Heart right ventricle (tissue), 16 donors: ENCODE measurements at regions of chr3 and their contacts with region 1.

Region 1: GRCh38 chr3:194265483-194265892 is 85.6 kb downstream of the CPN2 start:
- DNase-seq: peak; percentile 92 to 94
- ATAC-seq: peak; percentile 78 to 88 (median 80)
- H3K4me3 ChIP-seq: peak overlapping the region in 2 of 10 donors; percentile 12 to 20
- H3K27ac ChIP-seq: peak overlapping the region in 9 of 10 donors; percentile 70 to 93 (median 85)
- H3K4me1 ChIP-seq: peaks cover 32 to 68% (median 60%) of the 10 kb centered on the region in 9 donors
- H3K27me3 ChIP-seq: no peaks in the 10 kb centered on the region
- CTCF ChIP-seq: no peak

Region 2: DNA sequence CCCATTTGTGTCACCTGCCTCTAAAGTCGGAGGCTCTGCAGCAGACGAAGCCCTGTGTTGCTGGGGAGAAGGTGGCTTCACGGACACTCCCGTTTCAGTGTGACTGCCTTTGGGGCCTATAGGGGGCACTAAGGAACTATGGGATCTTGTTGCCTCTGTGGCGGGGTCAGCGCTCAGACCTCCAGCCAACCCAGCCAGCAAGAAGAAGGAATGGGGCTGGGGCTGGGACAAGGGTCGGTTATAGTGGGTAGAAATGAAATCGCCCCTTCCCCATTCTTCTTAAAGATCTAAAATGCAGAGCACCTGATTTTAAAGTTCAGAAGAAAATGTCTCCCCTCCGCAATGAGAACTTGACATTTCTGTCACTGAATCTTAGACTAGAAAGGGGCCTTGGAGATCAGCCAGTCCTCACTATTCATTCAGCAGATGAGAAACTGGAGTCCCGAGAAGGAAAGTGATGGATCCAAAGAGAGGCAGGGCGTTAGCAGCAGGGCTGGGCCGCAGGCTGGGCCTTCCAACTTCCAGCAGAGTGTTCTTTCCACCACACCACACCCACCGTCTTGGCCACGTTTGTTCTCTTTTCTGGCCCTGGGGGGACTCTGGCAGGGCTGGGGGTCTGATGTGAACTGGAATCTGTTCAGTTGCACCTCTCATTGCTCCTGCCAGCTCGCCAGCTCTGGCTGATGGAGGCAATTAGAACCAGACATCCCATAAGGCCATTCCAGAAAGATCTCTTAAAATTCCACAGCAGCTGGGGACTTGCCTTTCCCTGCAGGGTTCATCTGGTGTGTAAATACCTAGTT is 477.1 kb before region 1 on chr3:
- intact Hi-C with region 1: loop called in 1 of 10 experiments (anchors 5 kb)
- DNase-seq: peak; percentile 51 to 76
- ATAC-seq: peak; percentile 87 to 97 (median 95)
- H3K4me3 ChIP-seq: no peak overlapping the region
- H3K27ac ChIP-seq: peak overlapping the region in 4 of 10 donors; percentile 6 to 39 (median 16)
- H3K4me1 ChIP-seq: peaks cover 7 to 22% (median 12%) of the 10 kb centered on the region in 9 donors
- H3K27me3 ChIP-seq: peaks cover 3 to 61% (median 50%) of the 10 kb centered on the region in 7 donors
- CTCF ChIP-seq: peak; percentile 63 to 94 (median 84)

Region 3: GRCh38 chr3:194009892-194010533 is 255.5 kb before region 1 on chr3:
- intact Hi-C with region 1: loop called in 2 of 10 experiments (anchors 5 to 10 kb)
- DNase-seq: peak in 1 of 2 donors; percentile 12
- ATAC-seq: peak in 6 of 8 donors; percentile 46 to 73 (median 52)
- H3K4me3 ChIP-seq: no peak overlapping the region
- H3K27ac ChIP-seq: no peak overlapping the region
- H3K4me1 ChIP-seq: peaks cover 0 to 17% (median 5%) of the 10 kb centered on the region in 9 donors
- H3K27me3 ChIP-seq: peaks cover 0 to 82% (median 26%) of the 10 kb centered on the region in 7 donors
- CTCF ChIP-seq: peak in 1 of 9 donors; percentile 6

Region 4: DNA sequence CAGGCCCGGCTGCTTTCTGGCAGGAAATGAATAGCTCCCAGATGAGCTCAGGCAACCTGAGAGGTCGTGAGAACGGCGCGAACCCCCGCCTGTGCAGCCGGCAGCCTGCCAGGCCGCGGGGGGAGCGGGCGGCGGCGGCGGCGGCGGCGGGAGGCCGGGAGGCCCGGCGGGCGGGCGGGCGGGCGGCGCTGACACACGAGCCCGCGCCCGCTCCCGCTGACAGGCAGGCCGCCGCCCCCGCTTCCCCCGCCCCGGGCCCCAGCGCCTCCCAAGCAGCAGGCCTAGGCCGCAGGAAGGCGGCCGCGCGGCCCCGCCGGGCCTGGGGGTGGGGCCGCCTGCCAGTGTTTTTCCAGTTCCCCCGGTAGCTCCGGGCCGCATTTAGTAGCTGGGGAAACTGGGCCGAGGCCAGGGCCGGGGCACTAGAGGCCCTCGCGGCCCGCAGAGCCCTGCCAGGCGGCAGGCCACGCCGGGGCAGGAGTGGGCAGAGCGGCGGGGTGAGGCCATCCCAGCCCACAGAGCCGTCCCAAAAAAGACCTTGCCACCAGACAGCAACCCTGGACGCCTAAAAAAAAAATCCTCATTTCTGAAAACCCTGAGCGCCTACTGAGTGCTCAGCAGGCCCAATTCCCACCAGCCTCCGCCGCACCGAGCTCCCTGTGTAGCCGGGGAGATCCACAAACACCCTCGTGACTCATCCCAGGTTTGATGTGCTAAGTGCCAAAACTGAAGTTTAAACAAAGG is 123.9 kb before region 1 on chr3:
- intact Hi-C with region 1: loop called in 8 of 10 experiments (anchors 2 to 5 kb)
- DNase-seq: peak; percentile 93
- ATAC-seq: peak; percentile 66 to 89 (median 76)
- H3K4me3 ChIP-seq: peak overlapping the region in 8 of 10 donors; percentile 26 to 57 (median 52)
- H3K27ac ChIP-seq: peak overlapping the region; percentile 91 to 97 (median 94)
- H3K4me1 ChIP-seq: peaks cover 18 to 61% (median 47%) of the 10 kb centered on the region in 9 donors
- H3K27me3 ChIP-seq: peaks cover 0 to 76% (median 0%) of the 10 kb centered on the region in 7 donors
- CTCF ChIP-seq: peak in 3 of 9 donors; percentile 19 to 34 (median 24)

Region 5: GRCh38 chr3:194250098-194251002 is 15.1 kb before region 1 on chr3:
- intact Hi-C with region 1: no loop called
- DNase-seq: peak; percentile 87 to 88
- ATAC-seq: peak; percentile 70 to 81 (median 77)
- H3K4me3 ChIP-seq: peak overlapping the region in 6 of 10 donors; percentile 2 to 21 (median 10)
- H3K27ac ChIP-seq: peak overlapping the region in 2 of 10 donors; percentile 14 to 21
- H3K4me1 ChIP-seq: peaks cover 8 to 55% (median 37%) of the 10 kb centered on the region in 9 donors
- H3K27me3 ChIP-seq: peaks cover 0 to 12% (median 0%) of the 10 kb centered on the region in 7 donors
- CTCF ChIP-seq: no peak

Region 6: GRCh38 chr3:194306109-194306686 is 40.7 kb after region 1 on chr3:
- intact Hi-C with region 1: loop called in 3 of 10 experiments (anchors 5 kb)
- DNase-seq: no peak
- ATAC-seq: peak in 2 of 8 donors; percentile 26 to 28
- H3K4me3 ChIP-seq: no peak overlapping the region
- H3K27ac ChIP-seq: no peak overlapping the region
- H3K4me1 ChIP-seq: peaks cover 0 to 16% (median 5%) of the 10 kb centered on the region in 9 donors
- H3K27me3 ChIP-seq: peaks cover 0 to 48% (median 18%) of the 10 kb centered on the region in 7 donors
- CTCF ChIP-seq: no peak